ENCODE measurements at regions of chr13 and their contacts with region 1.

Region 1: DNA sequence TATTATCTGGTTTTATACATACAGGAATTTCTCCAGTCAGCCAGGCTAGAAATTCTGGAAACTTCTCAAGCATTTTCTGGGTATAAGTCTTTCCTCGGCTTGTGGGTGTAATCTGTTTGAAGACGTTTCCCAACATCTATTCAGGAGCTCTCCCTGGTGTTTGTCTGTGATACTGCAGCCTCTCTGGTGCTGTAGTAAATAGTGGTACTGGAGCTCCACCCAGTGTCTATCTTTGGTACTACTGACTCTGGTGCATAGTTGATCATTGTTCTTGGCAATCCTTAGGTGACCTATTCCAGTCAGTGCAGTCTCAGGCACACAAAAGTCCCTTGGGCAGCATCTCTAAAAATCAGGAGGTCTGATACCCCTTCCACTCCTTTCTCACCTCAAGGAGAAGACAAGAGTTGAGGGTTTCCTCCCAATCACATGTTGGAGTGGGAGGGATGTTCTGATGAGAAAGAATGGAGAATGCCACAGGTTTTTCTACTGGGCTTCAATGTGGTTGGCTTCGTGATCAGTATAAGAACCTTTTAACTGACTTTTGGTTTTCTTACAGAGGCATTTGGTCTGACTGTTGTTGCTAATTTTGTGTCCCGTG is 115.5 kb downstream of the CYSLTR2 start:
- DNase-seq: peak in 1 of 2 donors; percentile 92
- ATAC-seq: peak; percentile 83 to 94 (median 91)
- H3K4me3 ChIP-seq: no peak overlapping the region
- H3K27ac ChIP-seq: peak overlapping the region in 1 of 10 donors; percentile 29
- H3K4me1 ChIP-seq: peaks cover 0 to 9% (median 0%) of the 10 kb centered on the region in 9 donors
- H3K27me3 ChIP-seq: no peaks in the 10 kb centered on the region
- CTCF ChIP-seq: peak; percentile 96 to 100 (median 99)

Region 2: GRCh38 chr13:47945737-47946136 is 823.5 kb before region 1 on chr13:
- intact Hi-C with region 1: no loop called
- DNase-seq: no peak
- ATAC-seq: no peak
- H3K4me3 ChIP-seq: no peak overlapping the region
- H3K27ac ChIP-seq: no peak overlapping the region
- H3K4me1 ChIP-seq: no peaks in the 10 kb centered on the region
- H3K27me3 ChIP-seq: no peaks in the 10 kb centered on the region
- CTCF ChIP-seq: no peak

Region 3: DNA sequence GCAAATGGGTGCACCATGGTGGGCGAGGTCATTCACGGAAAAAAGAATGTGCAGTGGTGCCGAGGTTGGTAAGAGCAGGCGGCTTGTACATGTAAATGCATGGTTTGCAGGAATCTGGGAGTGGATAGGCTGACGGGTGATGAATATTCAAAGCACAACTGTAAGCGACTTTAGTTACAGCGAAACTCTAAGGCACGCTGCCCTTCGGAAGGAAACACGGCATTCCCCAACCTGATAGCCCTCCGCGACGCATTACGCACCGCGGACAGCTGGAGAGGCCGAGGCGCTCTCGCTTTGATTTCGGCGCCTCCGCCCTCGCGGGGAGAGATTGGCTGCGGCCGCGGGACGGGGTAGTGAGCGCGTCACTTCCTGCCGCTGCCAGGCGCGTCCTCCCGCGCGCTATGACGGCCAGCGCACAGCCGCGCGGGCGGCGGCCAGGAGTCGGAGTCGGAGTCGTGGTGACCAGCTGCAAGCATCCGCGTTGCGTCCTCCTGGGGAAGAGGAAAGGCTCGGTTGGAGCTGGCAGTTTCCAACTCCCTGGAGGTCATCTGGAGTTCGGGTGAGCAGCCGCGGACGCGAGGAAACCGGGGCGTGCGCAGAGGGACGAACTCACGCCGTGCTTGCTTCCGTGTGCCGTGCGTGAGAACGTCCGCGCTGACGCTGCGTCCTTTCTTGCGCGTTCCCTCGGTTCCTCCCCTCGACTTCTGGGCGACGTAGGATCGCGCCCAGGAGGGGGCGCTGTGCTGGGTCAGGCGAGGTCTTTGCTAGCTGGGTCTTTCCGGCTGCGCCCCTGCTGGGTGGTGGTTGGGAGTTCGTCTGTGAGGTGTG is 731.6 kb before region 1 on chr13 and contains the start of gene NUDT15:
- intact Hi-C with region 1: loop called in 1 of 10 experiments (anchors 5 kb)
- DNase-seq: peak; percentile 92 to 94
- ATAC-seq: peak; percentile 97 to 99 (median 99)
- H3K4me3 ChIP-seq: peak within 1 kb of the TSS; percentile 53 to 87 (median 66)
- H3K27ac ChIP-seq: peak within 1 kb of the TSS; percentile 91 to 98 (median 96)
- H3K4me1 ChIP-seq: peaks cover 4 to 26% (median 14%) of the 10 kb centered on the region in 9 donors
- H3K27me3 ChIP-seq: no peaks in the 10 kb centered on the region
- CTCF ChIP-seq: peak; percentile 86 to 99 (median 97)
- total RNA-seq, gene NUDT15: 9.6 to 13.7 (median 11.3) TPM

Region 4: DNA sequence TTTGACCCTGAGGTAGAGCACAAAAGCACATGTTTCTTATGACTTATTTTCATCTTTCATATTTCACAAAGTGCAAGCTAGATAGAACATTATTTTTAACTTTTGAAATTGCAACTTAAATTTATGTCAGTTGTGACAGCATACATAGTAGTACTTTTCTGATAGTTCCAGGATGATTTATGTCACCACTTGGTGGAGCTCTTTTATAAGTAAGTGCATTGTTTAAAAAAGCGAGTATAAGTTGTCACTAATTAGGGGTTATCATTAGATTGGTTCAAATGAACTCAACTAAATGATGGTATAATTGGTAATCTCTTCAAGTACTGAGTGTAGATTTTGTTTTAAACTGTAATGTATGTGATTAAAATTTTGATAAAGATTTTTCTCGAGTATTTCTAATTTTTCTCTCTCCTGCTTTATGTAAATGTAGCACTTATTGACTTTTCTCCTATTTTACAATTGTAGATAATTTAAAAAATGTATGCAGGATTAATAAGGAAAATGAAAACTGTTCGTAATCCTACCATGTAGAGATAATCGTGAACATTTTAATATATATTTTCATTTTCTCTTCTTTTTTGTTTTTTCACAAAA is 434.6 kb before region 1 on chr13:
- intact Hi-C with region 1: loop called in 6 of 10 experiments (anchors 2 to 10 kb)
- DNase-seq: no peak
- ATAC-seq: peak in 7 of 8 donors; percentile 41 to 83 (median 73)
- H3K4me3 ChIP-seq: no peak overlapping the region
- H3K27ac ChIP-seq: no peak overlapping the region
- H3K4me1 ChIP-seq: peaks cover 0 to 27% (median 6%) of the 10 kb centered on the region in 9 donors
- H3K27me3 ChIP-seq: no peaks in the 10 kb centered on the region
- CTCF ChIP-seq: peak; percentile 31 to 85 (median 70)

Region 5: DNA sequence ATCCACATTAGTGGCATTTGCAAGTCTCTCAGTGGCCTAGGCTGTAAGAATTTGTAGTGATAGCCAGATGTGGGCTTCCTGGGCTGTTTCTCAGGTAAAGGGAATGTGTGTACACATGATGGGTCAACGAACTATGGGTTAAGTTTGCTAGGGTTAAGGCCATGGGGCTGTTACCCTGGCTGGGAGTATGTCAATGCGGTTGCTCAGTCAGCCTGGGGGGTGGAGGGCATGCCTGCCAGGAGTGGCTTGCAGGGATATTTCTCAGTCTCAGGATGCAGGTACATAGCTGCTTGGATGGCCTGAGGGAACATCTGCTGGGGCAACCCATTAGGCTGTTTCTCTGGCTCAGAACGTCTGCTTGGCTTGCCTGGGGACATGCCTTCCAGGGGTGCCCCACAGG is 102.0 kb before region 1 on chr13:
- intact Hi-C with region 1: no loop called
- DNase-seq: no peak
- ATAC-seq: no peak
- H3K4me3 ChIP-seq: no peak overlapping the region
- H3K27ac ChIP-seq: peak overlapping the region in 2 of 10 donors; percentile 12 to 42
- H3K4me1 ChIP-seq: peaks cover 0 to 3% (median 0%) of the 10 kb centered on the region in 9 donors
- H3K27me3 ChIP-seq: no peaks in the 10 kb centered on the region
- CTCF ChIP-seq: no peak

Region 6: GRCh38 chr13:48790966-48791365 is 21.8 kb after region 1 on chr13:
- intact Hi-C with region 1: no loop called
- DNase-seq: no peak
- ATAC-seq: no peak
- H3K4me3 ChIP-seq: no peak overlapping the region
- H3K27ac ChIP-seq: peak overlapping the region in 1 of 10 donors; percentile 54
- H3K4me1 ChIP-seq: peaks cover 0 to 13% (median 0%) of the 10 kb centered on the region in 9 donors
- H3K27me3 ChIP-seq: no peaks in the 10 kb centered on the region
- CTCF ChIP-seq: no peak

Measured in heart right ventricle (tissue), 16 donors.